ENCODE measurements at regions of chr14 and their contacts with region 1.

Region 1: GRCh38 chr14:104078031-104078455 is 7.5 kb upstream of the ASPG start:
- DNase-seq: peak; percentile 68 to 91 (median 84)
- ATAC-seq: peak; percentile 100
- H3K4me3 ChIP-seq: no peak overlapping the region
- H3K4me3 Mint-ChIP-seq: peak overlapping the region; percentile 2
- H3K27ac ChIP-seq: peak overlapping the region in 1 of 2 experiments; percentile 41
- H3K27ac Mint-ChIP-seq: no peak overlapping the region
- H3K4me1 ChIP-seq: peaks cover 9% of the 10 kb centered on the region
- H3K4me1 Mint-ChIP-seq: peaks cover 8% of the 10 kb centered on the region
- H3K27me3 ChIP-seq: no peaks in the 10 kb centered on the region
- H3K27me3 Mint-ChIP-seq: peaks cover 9% of the 10 kb centered on the region
- CTCF ChIP-seq: peak; percentile 100

Region 2: DNA sequence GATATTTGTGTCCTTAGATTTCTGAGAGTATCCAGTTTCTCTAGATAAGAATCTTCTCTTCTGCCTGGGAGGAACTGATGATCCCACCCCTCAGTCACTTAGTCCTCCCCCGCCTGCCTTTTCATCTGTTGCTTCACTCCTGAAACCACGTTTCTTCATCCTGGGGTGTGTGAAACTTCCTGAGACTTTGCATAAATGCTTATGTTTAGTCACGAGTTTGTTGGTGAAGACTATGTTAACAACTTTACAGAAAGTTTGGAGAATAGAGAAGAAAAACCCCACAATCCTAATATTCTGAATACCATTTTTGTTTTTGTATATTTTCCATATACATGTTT is 659.6 kb before region 1 on chr14:
- CTCF ChIA-PET with region 1: no interaction called
- POLR2A ChIA-PET with region 1: no interaction called
- intact Hi-C with region 1: no loop called
- DNase-seq: no peak
- ATAC-seq: no peak
- H3K4me3 ChIP-seq: no peak overlapping the region
- H3K4me3 Mint-ChIP-seq: no peak overlapping the region
- H3K27ac ChIP-seq: no peak overlapping the region
- H3K27ac Mint-ChIP-seq: peak overlapping the region; percentile 4
- H3K4me1 ChIP-seq: no peaks in the 10 kb centered on the region
- H3K4me1 Mint-ChIP-seq: peaks cover 49% of the 10 kb centered on the region
- H3K27me3 ChIP-seq: no peaks in the 10 kb centered on the region
- H3K27me3 Mint-ChIP-seq: no peaks in the 10 kb centered on the region
- CTCF ChIP-seq: no peak

Region 3: DNA sequence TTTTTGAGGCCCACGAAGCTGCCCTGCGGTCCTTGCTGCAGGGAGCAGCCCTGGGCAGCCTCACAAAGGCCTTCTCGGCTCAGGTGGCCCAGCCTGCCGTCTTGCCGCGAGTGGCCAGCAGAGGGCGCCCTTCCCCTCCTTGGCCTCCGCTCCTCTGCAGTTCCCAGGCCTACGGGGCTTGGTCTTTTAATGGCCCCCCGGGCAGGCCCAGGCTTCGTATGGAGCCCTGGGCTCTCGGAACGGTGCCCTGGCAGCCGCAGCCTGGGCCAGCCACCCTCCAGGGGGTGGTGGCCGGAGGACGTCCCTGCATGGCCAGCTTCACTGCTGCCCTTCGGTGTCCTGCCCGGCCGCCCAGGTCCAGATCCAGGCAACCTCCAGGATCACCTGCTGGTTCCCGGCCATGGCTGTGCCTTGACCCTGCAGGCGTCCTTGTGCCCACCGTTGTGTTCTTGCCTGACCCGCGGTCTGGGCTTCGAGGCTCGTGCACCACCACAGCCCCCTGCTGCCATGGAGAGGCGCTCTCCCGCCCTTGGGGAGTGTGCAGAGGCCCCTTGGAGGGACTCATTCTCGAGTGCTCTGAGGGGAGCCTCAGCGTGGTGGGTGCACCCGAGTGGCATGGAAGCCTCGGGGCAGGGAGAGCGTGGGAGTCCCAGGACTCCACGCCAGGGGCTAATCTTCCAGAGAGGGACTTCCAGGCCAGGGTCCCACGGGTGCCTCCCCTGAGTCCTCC is 16.8 kb after region 1 on chr14:
- CTCF ChIA-PET with region 1: interaction called, 10 read pairs
- POLR2A ChIA-PET with region 1: no interaction called
- intact Hi-C with region 1: loop called (anchors 1 kb)
- DNase-seq: peak; percentile 55 to 81 (median 71)
- ATAC-seq: peak; percentile 73
- H3K4me3 ChIP-seq: no peak overlapping the region
- H3K4me3 Mint-ChIP-seq: no peak overlapping the region
- H3K27ac ChIP-seq: no peak overlapping the region
- H3K27ac Mint-ChIP-seq: no peak overlapping the region
- H3K4me1 ChIP-seq: peaks cover 8% of the 10 kb centered on the region
- H3K4me1 Mint-ChIP-seq: peaks cover 5% of the 10 kb centered on the region
- H3K27me3 ChIP-seq: no peaks in the 10 kb centered on the region
- H3K27me3 Mint-ChIP-seq: peaks cover 6% of the 10 kb centered on the region
- CTCF ChIP-seq: peak; percentile 86

Region 4: DNA sequence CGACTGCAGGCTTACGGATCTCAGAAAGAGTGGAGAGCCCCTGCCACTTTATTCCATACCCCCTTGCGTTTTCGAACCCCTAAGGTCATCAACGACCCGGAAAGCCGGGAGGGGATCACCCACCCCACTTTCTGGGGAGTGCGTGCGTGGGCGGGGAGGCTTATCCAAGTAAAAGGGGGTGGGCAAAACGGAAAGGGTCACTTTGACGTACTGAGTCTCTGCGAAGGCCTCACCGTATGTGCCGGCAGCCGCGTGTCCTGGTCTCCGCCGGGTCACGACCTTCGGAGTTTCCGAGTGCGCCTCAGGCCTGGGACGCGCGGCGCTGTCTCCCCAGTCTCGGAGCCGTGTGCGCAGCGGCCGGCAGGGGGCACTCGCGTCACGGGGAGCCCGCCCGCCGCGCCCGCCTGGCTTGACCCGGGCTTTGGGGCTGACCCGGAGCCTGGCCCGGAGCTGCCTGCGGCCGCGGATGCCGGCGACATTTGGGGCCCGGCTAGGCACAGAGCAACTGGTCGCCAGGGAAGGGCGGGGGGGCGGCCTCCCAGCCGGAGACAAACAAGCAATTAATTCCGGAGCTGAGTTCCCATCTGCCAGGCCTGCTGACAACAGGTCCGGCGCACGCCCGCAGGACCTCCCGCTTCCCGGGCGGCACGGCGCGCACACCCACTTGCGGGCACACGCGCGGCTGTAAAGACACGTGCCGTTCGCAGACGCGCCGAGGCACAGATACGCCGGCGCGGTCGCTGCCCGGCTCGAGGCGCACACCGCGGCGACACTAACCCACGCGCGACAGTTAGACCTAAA is 59.5 kb after region 1 on chr14:
- CTCF ChIA-PET with region 1: interaction called, 4 read pairs
- POLR2A ChIA-PET with region 1: no interaction called
- intact Hi-C with region 1: loop called (anchors 1 to 2 kb)
- DNase-seq: peak; percentile 27 to 81 (median 53)
- ATAC-seq: peak; percentile 61
- H3K4me3 ChIP-seq: peak overlapping the region in 1 of 2 experiments; percentile 52
- H3K4me3 Mint-ChIP-seq: peak overlapping the region; percentile 69
- H3K27ac ChIP-seq: no peak overlapping the region
- H3K27ac Mint-ChIP-seq: no peak overlapping the region
- H3K4me1 ChIP-seq: peaks cover 14% of the 10 kb centered on the region
- H3K4me1 Mint-ChIP-seq: peaks cover 3% of the 10 kb centered on the region
- H3K27me3 ChIP-seq: peaks cover 10 to 19% of the 10 kb centered on the region in 2 experiments
- H3K27me3 Mint-ChIP-seq: peaks cover 19% of the 10 kb centered on the region
- CTCF ChIP-seq: peak; percentile 70

Region 5: DNA sequence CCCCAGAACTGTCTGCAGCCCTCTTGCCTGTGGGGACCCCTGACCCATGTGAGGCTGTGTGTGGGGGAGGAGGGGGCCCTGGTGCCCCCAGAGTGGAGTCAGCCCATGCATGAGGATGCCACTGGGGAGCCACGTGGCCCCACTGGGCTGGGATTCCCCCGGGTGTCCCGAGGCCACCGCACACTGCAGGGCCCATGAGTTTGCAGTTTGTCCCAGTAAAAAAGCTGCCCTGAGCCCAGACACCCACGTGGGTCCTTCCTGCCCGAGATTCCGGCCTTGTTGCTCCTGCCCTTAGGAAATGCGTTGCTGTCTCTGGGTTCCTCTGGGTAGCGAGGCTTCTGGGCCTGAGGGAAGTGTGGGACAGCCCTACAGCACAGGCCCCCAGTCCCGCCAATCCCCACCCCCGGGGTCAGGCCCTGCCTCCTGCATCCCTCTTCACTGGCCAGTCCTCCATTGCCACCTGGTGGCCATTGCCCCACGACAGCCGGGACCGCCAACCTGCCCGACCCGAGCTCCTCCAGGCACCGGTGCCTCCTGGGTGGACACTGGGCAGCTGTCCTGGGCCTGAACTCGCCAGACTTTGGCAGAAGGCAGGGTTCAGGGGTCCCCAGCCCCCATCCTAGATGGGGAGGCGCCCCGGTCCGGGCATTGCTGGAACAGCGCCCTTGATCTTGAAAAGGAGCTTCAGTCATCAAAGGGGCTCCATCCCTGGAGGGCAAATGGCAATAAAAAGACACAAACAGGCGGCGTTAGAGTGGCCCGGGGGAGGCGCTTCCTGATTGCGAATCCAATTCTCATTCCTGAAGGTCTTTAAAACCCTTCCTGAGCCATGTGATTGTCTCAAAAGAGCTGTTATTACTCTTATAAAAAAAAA is 485.9 kb after region 1 on chr14:
- CTCF ChIA-PET with region 1: interaction called, 32 read pairs
- POLR2A ChIA-PET with region 1: no interaction called
- intact Hi-C with region 1: loop called in 1 of 2 experiments (anchors 1 kb)
- DNase-seq: peak; percentile 48 to 82 (median 71)
- ATAC-seq: peak; percentile 71
- H3K4me3 ChIP-seq: no peak overlapping the region
- H3K4me3 Mint-ChIP-seq: no peak overlapping the region
- H3K27ac ChIP-seq: no peak overlapping the region
- H3K27ac Mint-ChIP-seq: no peak overlapping the region
- H3K4me1 ChIP-seq: no peaks in the 10 kb centered on the region
- H3K4me1 Mint-ChIP-seq: no peaks in the 10 kb centered on the region
- H3K27me3 ChIP-seq: peaks cover 0 to 3% of the 10 kb centered on the region in 2 experiments
- H3K27me3 Mint-ChIP-seq: peaks cover 15% of the 10 kb centered on the region
- CTCF ChIP-seq: peak; percentile 72

Region 6: DNA sequence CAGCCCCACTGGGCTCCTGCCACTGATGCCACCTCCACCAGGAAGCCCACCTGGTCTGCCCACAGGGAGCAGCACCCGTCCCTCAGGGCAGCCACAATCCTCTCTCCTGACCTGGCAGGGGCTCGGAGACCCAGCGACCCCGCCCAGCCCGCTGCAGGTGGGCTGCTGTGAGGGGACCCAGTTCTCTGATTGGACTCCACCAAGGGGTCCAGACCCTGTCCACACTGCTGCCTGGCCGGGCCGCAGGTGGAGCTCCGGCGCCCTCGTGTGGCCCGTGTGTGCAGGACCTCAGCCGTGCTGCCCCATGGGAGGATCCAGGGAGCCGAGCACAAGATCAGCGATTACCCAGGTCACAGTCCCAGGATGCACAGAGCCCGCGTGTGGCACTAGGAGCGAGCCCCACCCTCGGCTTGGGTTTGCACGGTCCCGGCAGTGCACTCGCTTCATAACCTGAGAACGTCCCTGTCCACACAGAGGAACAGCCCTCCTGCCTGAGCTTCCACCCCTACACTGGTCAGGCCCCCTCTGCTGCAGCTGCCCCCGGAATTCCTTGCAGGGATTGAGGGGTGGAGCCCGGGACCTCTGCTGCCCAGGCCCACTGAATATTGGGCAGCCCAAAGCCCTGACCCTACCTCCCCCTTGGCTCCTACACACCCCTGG is 562.0 kb after region 1 on chr14:
- CTCF ChIA-PET with region 1: no interaction called
- POLR2A ChIA-PET with region 1: no interaction called
- intact Hi-C with region 1: loop called in 1 of 2 experiments (anchors 1 kb)
- DNase-seq: peak in 5 of 9 experiments; percentile 32 to 62 (median 53)
- ATAC-seq: peak; percentile 51
- H3K4me3 ChIP-seq: no peak overlapping the region
- H3K4me3 Mint-ChIP-seq: no peak overlapping the region
- H3K27ac ChIP-seq: no peak overlapping the region
- H3K27ac Mint-ChIP-seq: no peak overlapping the region
- H3K4me1 ChIP-seq: peaks cover 6% of the 10 kb centered on the region
- H3K4me1 Mint-ChIP-seq: no peaks in the 10 kb centered on the region
- H3K27me3 ChIP-seq: peaks cover 8 to 9% of the 10 kb centered on the region in 2 experiments
- H3K27me3 Mint-ChIP-seq: peaks cover 7% of the 10 kb centered on the region
- CTCF ChIP-seq: peak; percentile 58

Region 7: GRCh38 chr14:104708606-104709268 is 630.7 kb after region 1 on chr14:
- CTCF ChIA-PET with region 1: no interaction called
- POLR2A ChIA-PET with region 1: no interaction called
- intact Hi-C with region 1: loop called in 1 of 2 experiments (anchors 2 kb)
- DNase-seq: peak; percentile 53 to 84 (median 73)
- ATAC-seq: peak; percentile 98
- H3K4me3 ChIP-seq: no peak overlapping the region
- H3K4me3 Mint-ChIP-seq: no peak overlapping the region
- H3K27ac ChIP-seq: no peak overlapping the region
- H3K27ac Mint-ChIP-seq: no peak overlapping the region
- H3K4me1 ChIP-seq: no peaks in the 10 kb centered on the region
- H3K4me1 Mint-ChIP-seq: peaks cover 2% of the 10 kb centered on the region
- H3K27me3 ChIP-seq: no peaks in the 10 kb centered on the region
- H3K27me3 Mint-ChIP-seq: no peaks in the 10 kb centered on the region
- CTCF ChIP-seq: peak; percentile 94